ENCODE measurements at regions of chr7 and their contacts with region 1.

Region 1: DNA sequence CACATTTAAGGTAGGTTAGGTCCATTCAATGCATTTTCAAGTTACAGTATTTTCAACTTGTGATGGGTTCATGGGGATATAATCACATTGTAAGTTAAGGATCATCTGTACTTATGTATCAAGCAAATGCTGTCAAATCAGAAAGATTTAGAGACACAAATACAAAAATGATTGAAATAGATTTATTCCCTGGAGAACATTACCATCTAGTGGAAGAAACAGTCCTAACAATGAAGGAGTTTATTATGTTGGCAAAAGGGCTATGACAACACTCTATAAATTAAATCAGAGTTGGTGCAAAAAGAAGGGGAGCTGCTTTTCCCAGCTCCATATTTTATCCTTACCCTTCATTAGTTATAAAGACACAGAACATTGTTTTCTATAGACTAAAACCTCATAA is 69.0 kb downstream of the PRSS58 start:
- DNase-seq: no peak
- ATAC-seq: no peak

Region 2: GRCh38 chr7:141975806-141976523 is 212.9 kb before region 1 on chr7:
- intact Hi-C with region 1: loop called (anchors 5 kb)
- DNase-seq: peak; percentile 86
- ATAC-seq: no peak

Region 3: DNA sequence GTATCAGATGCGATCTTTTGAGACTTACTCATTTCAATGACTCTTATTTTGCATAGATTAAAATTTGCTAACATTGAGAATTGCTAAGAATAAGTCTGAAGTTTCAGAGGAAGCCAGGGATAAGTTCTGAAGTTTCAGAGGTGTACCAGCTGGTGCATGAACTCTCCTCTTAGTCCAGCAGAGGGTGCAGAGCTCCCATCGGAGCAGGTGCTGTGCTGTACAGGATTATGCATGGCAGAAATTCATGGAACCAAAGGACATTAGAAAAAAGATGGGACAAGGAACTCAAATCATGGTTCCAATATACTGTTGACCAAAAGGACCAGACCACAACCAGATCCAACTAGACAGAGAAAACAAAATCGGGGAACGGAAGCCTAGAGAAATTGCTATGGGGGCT is 35.4 kb before region 1 on chr7:
- intact Hi-C with region 1: no loop called
- DNase-seq: no peak
- ATAC-seq: no peak